ENCODE measurements at regions of chr16 and their contacts with region 1.

Region 1: DNA sequence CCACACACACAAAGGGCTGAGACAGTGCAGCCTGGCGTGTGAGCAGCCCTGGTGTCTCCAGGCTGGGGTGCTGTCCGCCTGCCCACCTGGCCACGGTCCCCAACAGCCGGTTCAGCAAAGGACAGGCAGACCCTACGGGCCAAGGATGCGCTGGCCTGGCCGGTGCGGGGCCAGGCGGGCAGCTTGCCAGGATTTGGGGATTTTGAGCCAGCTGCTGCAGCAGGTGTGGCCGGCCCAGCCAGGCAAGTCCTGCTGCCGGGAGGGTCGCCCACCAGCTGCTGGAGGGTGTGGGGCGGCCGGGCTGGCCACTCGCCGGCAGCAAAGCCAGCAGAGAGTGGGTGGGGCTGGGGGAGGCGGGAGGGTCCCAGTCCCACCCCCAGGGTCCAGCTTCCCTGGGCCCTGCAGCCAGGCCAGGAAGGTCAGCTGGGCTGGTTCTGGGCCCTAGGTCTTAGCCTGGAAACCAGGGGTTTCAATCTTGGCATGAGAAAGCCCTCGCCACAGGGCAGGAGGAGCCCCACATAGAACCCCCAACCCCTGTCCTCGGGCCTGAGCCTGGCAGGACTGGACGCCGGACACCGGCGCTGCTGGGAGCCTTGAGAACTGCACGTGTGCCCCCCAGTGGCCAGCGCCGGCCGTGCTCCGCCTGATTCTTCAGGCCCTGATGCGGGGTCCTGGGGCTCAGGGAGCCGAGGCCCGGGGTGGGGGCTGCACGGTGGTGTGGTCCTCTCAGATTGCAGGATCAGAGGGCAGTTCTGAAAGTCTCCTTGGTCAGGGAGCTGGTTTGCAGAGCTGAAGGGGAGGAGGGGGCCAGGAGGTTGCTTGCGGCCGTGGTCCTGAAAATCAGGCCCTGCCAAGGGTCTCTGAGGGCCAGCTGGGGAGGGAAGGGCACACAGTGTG is 17.6 kb upstream of the SSTR5 start:
- DNase-seq: peak; percentile 91
- H3K4me3 ChIP-seq: peak overlapping the region in 1 of 2 experiments; percentile 46; a peak in 1 of 4 replicates
- H3K27ac ChIP-seq: no peak overlapping the region
- H3K4me1 ChIP-seq: no peaks in the 10 kb centered on the region; a peak in 1 of 4 replicates
- H3K27me3 ChIP-seq: peaks cover 26% of the 10 kb centered on the region
- CTCF ChIP-seq: peak; percentile 78
- EP300 ChIP-seq: no peak
- RAD21 ChIP-seq: peak; percentile 83

Region 2: DNA sequence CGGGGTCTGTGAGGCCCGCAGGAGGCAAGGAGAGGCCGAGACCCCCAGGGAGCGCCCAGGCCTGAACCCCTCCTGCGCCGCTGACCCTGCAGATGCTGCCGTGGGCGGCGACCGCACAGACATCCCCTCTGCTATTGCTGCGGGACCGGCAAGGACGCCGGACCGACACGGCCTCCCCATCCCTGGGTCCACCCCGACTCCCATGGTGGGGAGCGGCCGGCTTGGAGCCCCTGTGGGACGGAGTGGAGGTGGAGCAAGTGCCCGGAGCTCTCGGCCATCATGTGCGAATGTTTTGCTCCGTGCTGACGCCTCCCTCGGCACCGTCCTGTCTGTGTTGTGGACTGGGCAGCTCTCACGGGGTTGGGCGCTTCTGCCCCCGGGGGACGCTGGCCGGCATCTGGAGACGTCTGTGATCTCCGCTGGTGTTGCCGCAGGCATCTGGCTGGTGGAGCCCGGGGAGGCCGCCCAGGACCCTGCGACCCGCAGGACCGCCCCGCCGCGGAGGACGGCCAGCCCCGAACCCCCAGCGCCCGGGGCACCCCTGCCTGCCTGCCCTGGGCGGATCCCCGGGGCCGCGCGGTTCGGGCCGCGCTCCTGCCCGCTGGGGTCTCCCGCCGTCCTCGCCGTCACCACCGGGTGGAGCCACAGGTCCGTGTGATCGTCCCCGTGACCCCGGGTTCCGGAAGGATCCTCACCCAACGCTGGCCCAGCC is 241.5 kb before region 1 on chr16:
- CTCF ChIA-PET with region 1: interaction called, 61 read pairs
- POLR2A ChIA-PET with region 1: no interaction called
- DNase-seq: peak; percentile 92
- H3K4me3 ChIP-seq: peak overlapping the region; percentile 15 to 53
- H3K27ac ChIP-seq: no peak overlapping the region
- H3K4me1 ChIP-seq: peaks cover 0 to 9% of the 10 kb centered on the region in 2 experiments; a peak in 1 of 4 replicates
- H3K27me3 ChIP-seq: peaks cover 9% of the 10 kb centered on the region; the same call in 1 of the 2 replicates
- CTCF ChIP-seq: peak; percentile 68
- EP300 ChIP-seq: no peak
- RAD21 ChIP-seq: peak; percentile 77

Region 3: GRCh38 chr16:1036726-1037393 is 18.0 kb before region 1 on chr16:
- CTCF ChIA-PET with region 1: interaction called, 76 read pairs
- POLR2A ChIA-PET with region 1: no interaction called
- DNase-seq: no peak
- H3K4me3 ChIP-seq: no peak overlapping the region
- H3K27ac ChIP-seq: no peak overlapping the region
- H3K4me1 ChIP-seq: no peaks in the 10 kb centered on the region
- H3K27me3 ChIP-seq: peaks cover 54% of the 10 kb centered on the region
- CTCF ChIP-seq: no peak
- EP300 ChIP-seq: no peak
- RAD21 ChIP-seq: no peak

Region 4: GRCh38 chr16:1069154-1069553 is 14.2 kb after region 1 on chr16:
- CTCF ChIA-PET with region 1: interaction called, 38 read pairs
- POLR2A ChIA-PET with region 1: no interaction called
- DNase-seq: no peak
- H3K4me3 ChIP-seq: no peak overlapping the region
- H3K27ac ChIP-seq: no peak overlapping the region
- H3K4me1 ChIP-seq: no peaks in the 10 kb centered on the region
- H3K27me3 ChIP-seq: peaks cover 94% of the 10 kb centered on the region
- CTCF ChIP-seq: no peak
- EP300 ChIP-seq: no peak
- RAD21 ChIP-seq: no peak

Measured in SK-N-SH (cell line).